Naive thymus-derived CD4-positive, alpha-beta T cell (primary cell): ENCODE measurements at regions of chr7 and their contacts with region 1.

Region 1: GRCh38 chr7:71733107-71733870 is 601.3 kb downstream of the GALNT17 start:
- DNase-seq: peak in 7 of 9 donors; percentile 24 to 63 (median 34)
- ATAC-seq: peak; percentile 36
- H3K4me3 ChIP-seq: no peak overlapping the region
- H3K4me3 Mint-ChIP-seq: peak overlapping the region in 1 of 10 donors; percentile 5
- H3K27ac ChIP-seq: no peak overlapping the region
- H3K27ac Mint-ChIP-seq: no peak overlapping the region
- H3K4me1 ChIP-seq: no peaks in the 10 kb centered on the region
- H3K4me1 Mint-ChIP-seq: peaks cover 0 to 11% (median 5%) of the 10 kb centered on the region in 7 donors
- H3K27me3 ChIP-seq: no peaks in the 10 kb centered on the region
- H3K27me3 Mint-ChIP-seq: peaks cover 0 to 14% (median 7%) of the 10 kb centered on the region in 5 donors

Region 2: GRCh38 chr7:70829221-70830059 is 903.8 kb before region 1 on chr7:
- CTCF ChIA-PET with region 1: no interaction called
- POLR2A ChIA-PET with region 1: no interaction called
- intact Hi-C with region 1: loop called in 1 of 2 experiments (anchors 1 kb)
- DNase-seq: peak in 8 of 9 donors; percentile 5 to 49 (median 42)
- ATAC-seq: peak; percentile 81
- H3K4me3 ChIP-seq: peak overlapping the region; percentile 31
- H3K4me3 Mint-ChIP-seq: peak overlapping the region in 9 of 10 donors; percentile 23 to 82 (median 67)
- H3K27ac ChIP-seq: no peak overlapping the region
- H3K27ac Mint-ChIP-seq: peak overlapping the region in 2 of 9 donors; percentile 2 to 16
- H3K4me1 ChIP-seq: no peaks in the 10 kb centered on the region
- H3K4me1 Mint-ChIP-seq: peaks cover 5 to 14% (median 9%) of the 10 kb centered on the region in 7 donors
- H3K27me3 ChIP-seq: no peaks in the 10 kb centered on the region
- H3K27me3 Mint-ChIP-seq: peaks cover 3 to 13% (median 8%) of the 10 kb centered on the region in 5 donors

Region 3: DNA sequence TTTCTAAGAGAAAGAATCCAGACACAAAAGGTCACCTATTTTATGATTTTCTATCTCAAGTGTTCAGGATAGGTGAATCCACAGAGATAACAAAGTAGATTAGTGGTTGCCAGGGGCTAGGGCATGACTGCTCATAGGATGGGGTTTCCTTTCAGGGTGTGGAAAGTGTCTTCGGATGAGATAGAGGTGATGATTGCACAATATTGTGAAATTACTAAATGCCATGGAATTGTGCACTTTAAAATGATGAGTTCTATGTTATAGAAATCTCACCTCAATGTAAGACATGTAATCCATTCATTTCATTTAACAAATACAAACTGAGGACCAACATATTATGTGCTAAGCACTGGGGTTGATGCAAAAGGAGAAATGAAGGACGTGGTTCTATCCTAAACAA is 677.8 kb before region 1 on chr7:
- CTCF ChIA-PET with region 1: no interaction called
- POLR2A ChIA-PET with region 1: no interaction called
- intact Hi-C with region 1: no loop called
- DNase-seq: no peak
- ATAC-seq: no peak
- H3K4me3 ChIP-seq: no peak overlapping the region
- H3K4me3 Mint-ChIP-seq: no peak overlapping the region
- H3K27ac ChIP-seq: no peak overlapping the region
- H3K27ac Mint-ChIP-seq: no peak overlapping the region
- H3K4me1 ChIP-seq: no peaks in the 10 kb centered on the region
- H3K4me1 Mint-ChIP-seq: no peaks in the 10 kb centered on the region
- H3K27me3 ChIP-seq: no peaks in the 10 kb centered on the region
- H3K27me3 Mint-ChIP-seq: no peaks in the 10 kb centered on the region

Region 4: DNA sequence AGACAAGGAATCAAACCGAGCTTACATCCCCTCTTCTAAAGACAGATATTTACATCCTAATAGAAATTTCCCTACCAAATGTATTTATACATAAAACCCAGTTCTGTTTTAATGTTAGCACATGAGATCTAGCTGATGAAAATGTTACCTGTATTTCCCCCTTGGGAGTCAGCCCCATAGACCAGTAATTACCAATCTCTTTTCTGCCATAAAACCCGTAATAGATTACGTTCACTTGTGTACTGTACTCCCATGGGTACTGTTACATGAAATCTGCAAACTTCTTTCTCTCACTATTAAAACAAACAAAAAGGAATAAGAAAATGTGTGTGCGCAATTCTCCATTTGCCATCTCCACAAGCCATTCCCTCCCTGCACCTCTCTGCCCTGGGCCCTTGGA is 228.0 kb after region 1 on chr7:
- CTCF ChIA-PET with region 1: no interaction called
- POLR2A ChIA-PET with region 1: no interaction called
- intact Hi-C with region 1: no loop called
- DNase-seq: no peak
- ATAC-seq: no peak
- H3K4me3 ChIP-seq: no peak overlapping the region
- H3K4me3 Mint-ChIP-seq: no peak overlapping the region
- H3K27ac ChIP-seq: no peak overlapping the region
- H3K27ac Mint-ChIP-seq: no peak overlapping the region
- H3K4me1 ChIP-seq: no peaks in the 10 kb centered on the region
- H3K4me1 Mint-ChIP-seq: no peaks in the 10 kb centered on the region
- H3K27me3 ChIP-seq: no peaks in the 10 kb centered on the region
- H3K27me3 Mint-ChIP-seq: no peaks in the 10 kb centered on the region